ENCODE measurements at regions of chr6 and their contacts with region 1.

Region 1: GRCh38 chr6:161393839-161394364 is 120.0 kb upstream of the AGPAT4 start:
- DNase-seq: peak; percentile 64 to 84 (median 76)
- H3K4me3 ChIP-seq: no peak overlapping the region
- H3K4me3 Mint-ChIP-seq: no peak overlapping the region
- H3K27ac ChIP-seq: no peak overlapping the region
- H3K27ac Mint-ChIP-seq: no peak overlapping the region
- H3K4me1 ChIP-seq: peaks cover 8% of the 10 kb centered on the region
- H3K4me1 Mint-ChIP-seq: no peaks in the 10 kb centered on the region
- H3K27me3 ChIP-seq: no peaks in the 10 kb centered on the region
- H3K27me3 Mint-ChIP-seq: no peaks in the 10 kb centered on the region

Region 2: DNA sequence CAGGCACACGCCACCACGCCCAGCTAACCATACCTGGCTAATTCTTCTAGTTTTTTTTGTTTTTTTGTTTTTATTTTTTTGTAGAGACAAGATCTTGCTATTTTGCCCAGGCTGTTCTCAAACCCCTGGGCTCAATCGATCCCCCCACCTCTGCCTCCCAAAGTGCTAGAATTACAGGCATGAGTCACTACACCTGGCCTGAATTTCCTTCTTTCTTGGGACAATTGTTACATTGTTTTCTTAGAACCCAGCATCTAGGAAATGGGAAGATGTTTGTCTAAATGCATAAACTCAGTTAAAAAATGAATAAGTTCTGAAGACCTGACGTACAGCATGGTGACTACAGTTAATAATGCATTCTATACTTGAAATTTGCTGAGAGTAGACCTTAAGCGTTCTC is 109.2 kb before region 1 on chr6:
- CTCF ChIA-PET with region 1: no interaction called
- POLR2A ChIA-PET with region 1: no interaction called
- intact Hi-C with region 1: no loop called
- DNase-seq: no peak
- H3K4me3 ChIP-seq: no peak overlapping the region
- H3K4me3 Mint-ChIP-seq: no peak overlapping the region
- H3K27ac ChIP-seq: no peak overlapping the region
- H3K27ac Mint-ChIP-seq: no peak overlapping the region
- H3K4me1 ChIP-seq: no peaks in the 10 kb centered on the region
- H3K4me1 Mint-ChIP-seq: no peaks in the 10 kb centered on the region
- H3K27me3 ChIP-seq: no peaks in the 10 kb centered on the region
- H3K27me3 Mint-ChIP-seq: peaks cover 6 to 20% of the 10 kb centered on the region in 2 donors

Region 3: DNA sequence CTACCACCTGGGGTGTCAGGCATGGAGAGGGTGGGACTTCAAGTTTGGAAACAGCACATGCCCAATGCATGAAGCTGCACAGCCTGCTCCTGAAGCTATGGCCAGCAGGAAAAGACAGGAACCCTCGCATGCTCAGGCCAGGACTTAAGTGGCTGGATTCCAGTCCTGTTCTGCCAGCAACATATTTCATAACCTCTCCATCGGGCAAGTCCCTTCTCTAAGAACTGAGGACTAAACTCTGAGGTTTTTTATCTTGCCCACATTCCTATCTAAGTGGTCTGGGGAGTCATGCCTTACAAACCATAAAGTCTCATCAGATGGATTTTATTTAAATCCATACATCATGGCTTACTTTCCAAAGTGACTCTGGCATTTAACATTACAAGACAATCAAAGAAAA is 92.6 kb before region 1 on chr6:
- CTCF ChIA-PET with region 1: no interaction called
- POLR2A ChIA-PET with region 1: no interaction called
- intact Hi-C with region 1: no loop called
- DNase-seq: no peak
- H3K4me3 ChIP-seq: no peak overlapping the region
- H3K4me3 Mint-ChIP-seq: no peak overlapping the region
- H3K27ac ChIP-seq: no peak overlapping the region
- H3K27ac Mint-ChIP-seq: no peak overlapping the region
- H3K4me1 ChIP-seq: no peaks in the 10 kb centered on the region
- H3K4me1 Mint-ChIP-seq: no peaks in the 10 kb centered on the region
- H3K27me3 ChIP-seq: no peaks in the 10 kb centered on the region
- H3K27me3 Mint-ChIP-seq: peaks cover 0 to 1% of the 10 kb centered on the region in 2 donors

Region 4: DNA sequence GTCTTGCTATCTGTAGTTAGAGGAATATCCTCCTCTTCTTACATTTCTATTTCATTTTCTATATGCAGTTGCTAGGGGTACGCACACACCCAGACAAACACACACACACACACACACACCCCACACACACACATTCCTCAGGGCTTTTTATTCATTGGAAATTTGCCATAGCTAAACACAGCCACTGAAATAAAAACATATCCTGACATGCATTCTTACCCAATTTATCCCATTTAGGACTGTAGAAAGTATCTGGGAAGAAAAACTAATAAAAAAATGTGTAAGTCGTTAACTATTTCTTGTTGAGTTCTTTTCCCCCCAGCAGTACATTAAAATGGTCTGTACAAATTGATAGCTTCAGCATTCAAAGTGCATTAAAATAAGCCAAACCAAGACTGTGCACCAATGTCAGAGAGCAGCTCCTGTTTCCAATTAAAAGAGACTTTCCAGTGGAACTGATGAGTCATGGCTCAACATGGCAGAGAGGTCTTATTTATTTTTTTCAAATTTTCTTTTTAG is 237.8 kb after region 1 on chr6:
- CTCF ChIA-PET with region 1: no interaction called
- POLR2A ChIA-PET with region 1: no interaction called
- intact Hi-C with region 1: no loop called
- DNase-seq: no peak
- H3K4me3 ChIP-seq: no peak overlapping the region
- H3K4me3 Mint-ChIP-seq: peak overlapping the region in 3 of 8 donors; percentile 6 to 18 (median 16)
- H3K27ac ChIP-seq: no peak overlapping the region
- H3K27ac Mint-ChIP-seq: no peak overlapping the region
- H3K4me1 ChIP-seq: peaks cover 6% of the 10 kb centered on the region
- H3K4me1 Mint-ChIP-seq: peaks cover 3 to 5% (median 4%) of the 10 kb centered on the region in 4 donors
- H3K27me3 ChIP-seq: no peaks in the 10 kb centered on the region
- H3K27me3 Mint-ChIP-seq: no peaks in the 10 kb centered on the region

Region 5: GRCh38 chr6:161694995-161695394 is 301.1 kb after region 1 on chr6:
- CTCF ChIA-PET with region 1: interaction called, 3 read pairs
- POLR2A ChIA-PET with region 1: no interaction called
- intact Hi-C with region 1: loop called (anchors 1 kb)
- DNase-seq: no peak
- H3K4me3 ChIP-seq: no peak overlapping the region
- H3K4me3 Mint-ChIP-seq: no peak overlapping the region
- H3K27ac ChIP-seq: no peak overlapping the region
- H3K27ac Mint-ChIP-seq: no peak overlapping the region
- H3K4me1 ChIP-seq: no peaks in the 10 kb centered on the region
- H3K4me1 Mint-ChIP-seq: no peaks in the 10 kb centered on the region
- H3K27me3 ChIP-seq: no peaks in the 10 kb centered on the region
- H3K27me3 Mint-ChIP-seq: no peaks in the 10 kb centered on the region

Region 6: DNA sequence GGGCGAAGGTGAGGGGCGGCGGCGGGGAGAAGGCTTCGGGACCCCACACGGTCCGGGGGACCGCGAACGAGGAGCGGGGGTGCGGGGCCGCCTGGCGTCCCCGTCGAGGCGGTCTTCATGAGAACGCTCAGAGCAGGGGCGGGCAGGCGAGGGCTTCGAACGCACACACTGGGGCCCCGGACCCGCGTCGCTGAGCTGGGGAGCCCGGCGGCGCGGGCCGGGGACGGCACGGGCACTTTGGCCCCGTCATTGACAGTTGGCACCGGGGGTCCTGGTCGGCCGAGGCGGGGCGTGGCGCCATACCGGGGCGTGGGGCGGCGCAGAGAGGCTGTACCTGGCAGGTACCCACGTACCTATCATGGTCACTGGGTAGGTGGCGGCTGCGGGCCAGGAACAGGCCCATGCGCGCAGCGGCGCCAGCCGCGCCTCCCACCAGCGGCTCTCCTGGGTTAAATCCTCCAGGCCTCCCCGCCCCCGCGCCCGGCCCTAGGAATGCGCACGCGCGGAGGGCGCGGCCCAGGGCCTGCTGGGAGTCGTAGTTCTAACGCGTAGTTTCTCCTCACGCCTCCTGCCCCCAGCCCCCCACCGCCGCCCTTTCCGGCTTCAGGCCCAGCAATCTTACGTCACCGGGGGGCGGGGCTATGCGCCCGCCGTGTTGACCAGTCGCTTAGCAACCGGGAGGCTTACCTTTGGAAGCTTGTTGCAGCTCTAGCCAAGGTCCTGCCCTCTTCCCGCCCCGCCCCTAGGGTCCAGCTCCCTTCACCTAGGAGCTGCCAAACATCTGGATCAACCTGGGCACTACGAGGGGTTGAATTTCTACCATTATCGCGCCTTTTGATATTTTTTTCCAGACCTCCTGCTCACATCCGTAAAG is 1333.6 kb after region 1 on chr6 and contains the starts of genes PACRG and PRKN:
- CTCF ChIA-PET with region 1: no interaction called
- POLR2A ChIA-PET with region 1: interaction called, 3 read pairs
- intact Hi-C with region 1: loop called (anchors 5 kb)
- DNase-seq: peak; percentile 96 to 98 (median 97)
- H3K4me3 ChIP-seq: peak within 1 kb of the TSS; percentile 31 to 73
- H3K4me3 Mint-ChIP-seq: peak within 1 kb of the TSS; percentile 90 to 99 (median 95)
- H3K27ac ChIP-seq: peak within 1 kb of the TSS; percentile 81
- H3K27ac Mint-ChIP-seq: peak within 1 kb of the TSS; percentile 93 to 99 (median 97)
- H3K4me1 ChIP-seq: peaks cover 12% of the 10 kb centered on the region
- H3K4me1 Mint-ChIP-seq: peaks cover 8 to 18% (median 13%) of the 10 kb centered on the region in 4 donors
- H3K27me3 ChIP-seq: no peaks in the 10 kb centered on the region
- H3K27me3 Mint-ChIP-seq: no peaks in the 10 kb centered on the region
- total RNA-seq, gene PACRG: 0.81 TPM in 1 of 2 experiments, not detected in the other
- total RNA-seq, gene PRKN: 3.2 to 5.3 TPM